ENCODE measurements at regions of chr3 and their contacts with region 1.

Region 1: GRCh38 chr3:114789803-114790202 is 357.3 kb downstream of the ZBTB20 start:
- DNase-seq: no peak
- ATAC-seq: no peak
- H3K4me3 ChIP-seq: no peak overlapping the region
- H3K4me3 Mint-ChIP-seq: no peak overlapping the region
- H3K27ac ChIP-seq: no peak overlapping the region
- H3K27ac Mint-ChIP-seq: no peak overlapping the region
- H3K4me1 ChIP-seq: no peaks in the 10 kb centered on the region
- H3K4me1 Mint-ChIP-seq: peaks cover 2% of the 10 kb centered on the region
- H3K27me3 ChIP-seq: no peaks in the 10 kb centered on the region
- H3K27me3 Mint-ChIP-seq: no peaks in the 10 kb centered on the region
- CTCF ChIP-seq: no peak

Region 2: GRCh38 chr3:114804099-114804498 is 14.3 kb after region 1 on chr3:
- CTCF ChIA-PET with region 1: no interaction called
- POLR2A ChIA-PET with region 1: no interaction called
- intact Hi-C with region 1: loop called (anchors 2 kb)
- DNase-seq: no peak
- ATAC-seq: no peak
- H3K4me3 ChIP-seq: no peak overlapping the region
- H3K4me3 Mint-ChIP-seq: no peak overlapping the region
- H3K27ac ChIP-seq: no peak overlapping the region
- H3K27ac Mint-ChIP-seq: no peak overlapping the region
- H3K4me1 ChIP-seq: peaks cover 0 to 3% of the 10 kb centered on the region in 2 donors
- H3K4me1 Mint-ChIP-seq: peaks cover 15% of the 10 kb centered on the region
- H3K27me3 ChIP-seq: no peaks in the 10 kb centered on the region
- H3K27me3 Mint-ChIP-seq: no peaks in the 10 kb centered on the region
- CTCF ChIP-seq: no peak

Region 3: GRCh38 chr3:114973536-114973935 is 183.7 kb after region 1 on chr3:
- CTCF ChIA-PET with region 1: no interaction called
- POLR2A ChIA-PET with region 1: interaction called, 11 read pairs
- intact Hi-C with region 1: no loop called
- DNase-seq: no peak
- ATAC-seq: no peak
- H3K4me3 ChIP-seq: no peak overlapping the region
- H3K4me3 Mint-ChIP-seq: no peak overlapping the region
- H3K27ac ChIP-seq: no peak overlapping the region
- H3K27ac Mint-ChIP-seq: no peak overlapping the region
- H3K4me1 ChIP-seq: no peaks in the 10 kb centered on the region
- H3K4me1 Mint-ChIP-seq: peaks cover 2% of the 10 kb centered on the region
- H3K27me3 ChIP-seq: no peaks in the 10 kb centered on the region
- H3K27me3 Mint-ChIP-seq: no peaks in the 10 kb centered on the region
- CTCF ChIP-seq: no peak

Measured in B cell (primary cell).